Mammary epithelial cell (primary cell): ENCODE measurements at regions of chr9 and their contacts with region 1.

Region 1: DNA sequence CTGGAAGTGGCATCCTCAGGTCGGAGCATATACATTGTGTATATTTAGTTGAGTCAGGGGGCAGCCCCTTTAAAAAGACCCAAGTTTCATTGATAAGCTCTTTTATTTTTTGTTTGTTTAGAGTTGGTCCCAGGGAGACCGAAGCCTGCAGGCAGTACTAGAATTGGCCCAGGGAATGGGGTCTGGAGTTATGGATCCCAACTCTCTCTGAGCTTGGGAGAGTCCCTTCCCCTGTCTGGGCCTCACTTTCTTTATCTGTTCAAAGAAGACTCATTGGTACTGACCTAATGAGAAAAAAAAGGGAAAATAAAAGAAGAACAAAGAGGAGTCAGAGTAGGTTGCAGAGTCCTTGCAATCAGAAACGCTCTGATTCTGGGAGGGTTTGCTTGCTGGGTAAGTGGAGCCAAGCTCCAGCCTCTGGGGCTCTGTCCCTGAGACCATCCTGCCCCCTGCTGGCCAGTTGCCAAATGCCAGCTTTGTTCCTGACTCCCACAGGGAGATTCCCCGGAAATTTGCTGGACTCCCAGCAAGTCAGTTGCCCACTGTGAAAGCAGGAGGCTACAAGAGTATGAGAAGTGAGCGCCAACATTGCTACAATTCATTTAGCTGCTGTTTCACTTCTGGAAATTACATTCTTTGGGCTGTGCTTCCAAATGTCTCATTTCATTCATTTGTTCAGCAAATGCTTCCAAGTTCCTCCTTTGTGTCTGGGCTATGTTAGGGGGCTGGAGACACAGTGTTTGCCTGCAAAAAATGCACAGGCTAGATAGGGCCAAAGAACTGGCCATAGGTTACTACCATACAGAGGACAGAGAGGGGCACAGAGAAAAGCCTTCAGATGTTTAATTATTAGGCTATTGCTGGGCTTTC is 156.2 kb downstream of the MELK start:
- DNase-seq: peak; percentile 68
- H3K4me3 ChIP-seq: no peak overlapping the region
- H3K27ac ChIP-seq: no peak overlapping the region
- H3K4me1 ChIP-seq: no peaks in the 10 kb centered on the region
- H3K27me3 ChIP-seq: no peaks in the 10 kb centered on the region
- CTCF ChIP-seq: peak; percentile 80 to 89

Region 2: GRCh38 chr9:36551129-36551528 is 177.8 kb before region 1 on chr9:
- CTCF ChIA-PET with region 1: no interaction called
- dilution Hi-C with region 1: no loop called
- in situ Hi-C with region 1: no loop called
- intact Hi-C with region 1: loop called (anchors 1 kb)
- DNase-seq: no peak
- H3K4me3 ChIP-seq: no peak overlapping the region
- H3K27ac ChIP-seq: no peak overlapping the region
- H3K4me1 ChIP-seq: no peaks in the 10 kb centered on the region
- H3K27me3 ChIP-seq: no peaks in the 10 kb centered on the region
- CTCF ChIP-seq: no peak

Region 3: DNA sequence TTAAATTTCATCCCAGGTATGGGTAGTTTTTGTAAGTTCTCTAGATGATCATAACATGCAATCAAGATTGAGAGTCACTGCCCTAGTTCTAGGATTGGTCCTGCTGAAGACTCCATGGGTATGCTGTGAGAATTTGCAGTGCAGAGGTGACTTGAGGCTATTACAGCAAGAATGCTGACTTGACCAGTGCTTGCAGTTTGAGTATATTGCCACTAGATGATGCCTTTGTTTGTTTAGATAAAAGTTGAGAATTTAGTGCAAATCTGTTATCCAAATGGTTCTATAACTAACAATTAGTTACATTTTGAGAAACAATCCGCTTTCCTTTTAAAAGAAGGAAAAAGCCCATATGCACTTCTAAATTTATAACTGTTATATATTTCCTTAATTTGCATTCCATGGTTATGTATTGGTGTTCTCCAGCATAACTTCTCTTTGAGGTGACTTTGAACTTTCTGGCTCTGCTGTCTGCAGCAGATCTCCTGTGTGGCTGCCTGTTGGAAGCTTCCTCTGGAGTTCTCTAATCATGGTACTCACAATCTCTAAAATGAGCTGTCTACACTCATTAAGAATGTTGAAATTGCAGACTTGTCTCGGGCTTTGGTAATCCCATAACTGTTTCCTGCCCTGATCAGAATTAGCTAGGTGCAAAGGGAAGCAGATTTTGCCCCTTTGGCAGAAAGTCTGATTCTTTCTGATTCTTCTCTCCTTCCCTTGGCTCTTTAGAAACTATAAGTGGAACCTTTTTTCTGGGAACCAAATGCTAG is 131.3 kb before region 1 on chr9:
- CTCF ChIA-PET with region 1: no interaction called
- dilution Hi-C with region 1: no loop called
- in situ Hi-C with region 1: no loop called
- intact Hi-C with region 1: loop called (anchors 1 kb)
- DNase-seq: peak; percentile 38
- H3K4me3 ChIP-seq: no peak overlapping the region
- H3K27ac ChIP-seq: no peak overlapping the region
- H3K4me1 ChIP-seq: no peaks in the 10 kb centered on the region
- H3K27me3 ChIP-seq: no peaks in the 10 kb centered on the region
- CTCF ChIP-seq: peak; percentile 76 to 90

Region 4: DNA sequence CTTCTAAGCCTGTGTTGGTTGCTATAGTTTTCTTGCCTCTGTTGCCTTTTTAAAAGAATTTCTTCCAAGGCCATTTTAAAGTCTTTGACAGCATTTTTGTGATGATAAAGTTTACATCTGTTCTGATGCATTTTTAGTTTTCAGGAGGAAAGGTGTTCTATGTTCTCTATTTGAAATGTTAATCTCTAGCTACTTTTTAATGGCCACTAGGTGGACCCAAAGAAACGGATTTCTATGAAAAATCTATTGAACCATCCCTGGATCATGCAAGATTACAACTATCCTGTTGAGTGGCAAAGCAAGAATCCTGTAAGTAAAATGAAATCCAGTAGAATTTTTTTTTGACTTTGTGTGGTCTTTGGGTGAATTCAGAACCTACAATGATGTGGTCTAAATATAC is 96.0 kb before region 1 on chr9:
- CTCF ChIA-PET with region 1: interaction called, 8 read pairs
- dilution Hi-C with region 1: no loop called
- in situ Hi-C with region 1: no loop called
- intact Hi-C with region 1: loop called (anchors 1 kb)
- DNase-seq: peak; percentile 12
- H3K4me3 ChIP-seq: no peak overlapping the region
- H3K27ac ChIP-seq: no peak overlapping the region
- H3K4me1 ChIP-seq: no peaks in the 10 kb centered on the region
- H3K27me3 ChIP-seq: no peaks in the 10 kb centered on the region
- CTCF ChIP-seq: peak; percentile 53 to 58

Region 5: GRCh38 chr9:36748322-36748899 is 19.5 kb after region 1 on chr9:
- CTCF ChIA-PET with region 1: no interaction called
- dilution Hi-C with region 1: no loop called
- in situ Hi-C with region 1: no loop called
- intact Hi-C with region 1: no loop called
- DNase-seq: peak; percentile 38
- H3K4me3 ChIP-seq: no peak overlapping the region
- H3K27ac ChIP-seq: no peak overlapping the region
- H3K4me1 ChIP-seq: no peaks in the 10 kb centered on the region
- H3K27me3 ChIP-seq: peaks cover 3% of the 10 kb centered on the region
- CTCF ChIP-seq: no peak

Region 6: GRCh38 chr9:37134166-37134565 is 405.3 kb after region 1 on chr9:
- CTCF ChIA-PET with region 1: no interaction called
- dilution Hi-C with region 1: no loop called
- in situ Hi-C with region 1: no loop called
- intact Hi-C with region 1: no loop called
- DNase-seq: no peak
- H3K4me3 ChIP-seq: no peak overlapping the region
- H3K27ac ChIP-seq: no peak overlapping the region
- H3K4me1 ChIP-seq: no peaks in the 10 kb centered on the region
- H3K27me3 ChIP-seq: no peaks in the 10 kb centered on the region
- CTCF ChIP-seq: no peak